ENCODE measurements at regions of chr4 and their contacts with region 1.

Region 1: GRCh38 chr4:140367738-140368137 is 5.7 kb upstream of the SCOC start:
- DNase-seq: no peak
- H3K4me3 ChIP-seq: no peak overlapping the region
- H3K27me3 ChIP-seq: no peaks in the 10 kb centered on the region
- CTCF ChIP-seq: no peak

Region 2: DNA sequence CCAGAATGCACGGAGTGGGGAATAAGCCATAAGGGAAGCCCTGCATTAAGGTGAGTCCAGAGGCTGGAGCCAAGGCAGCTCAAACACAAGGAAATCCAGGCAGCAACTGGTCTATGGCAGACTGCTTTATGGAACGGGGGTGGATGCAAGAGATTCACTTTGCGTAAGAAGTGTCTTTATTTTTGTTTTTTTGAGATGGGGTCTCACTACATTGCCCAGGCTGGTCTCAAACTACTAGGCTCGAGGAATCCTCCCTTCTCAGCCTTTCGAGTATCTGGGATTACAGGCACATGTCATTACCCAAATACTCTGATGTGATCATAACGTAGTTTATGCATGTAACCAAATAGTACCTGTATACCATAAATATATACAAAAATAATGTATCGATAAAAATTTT is 413.2 kb before region 1 on chr4:
- CTCF ChIA-PET with region 1: no interaction called
- POLR2A ChIA-PET with region 1: interaction called, 17 read pairs
- DNase-seq: no peak
- H3K4me3 ChIP-seq: no peak overlapping the region
- H3K27me3 ChIP-seq: peaks cover 3% of the 10 kb centered on the region
- CTCF ChIP-seq: no peak

Region 3: GRCh38 chr4:140037357-140038030 is 330.2 kb before region 1 on chr4:
- CTCF ChIA-PET with region 1: no interaction called
- POLR2A ChIA-PET with region 1: no interaction called
- DNase-seq: peak; percentile 66
- H3K4me3 ChIP-seq: no peak overlapping the region
- H3K27me3 ChIP-seq: no peaks in the 10 kb centered on the region
- CTCF ChIP-seq: no peak

Region 4: DNA sequence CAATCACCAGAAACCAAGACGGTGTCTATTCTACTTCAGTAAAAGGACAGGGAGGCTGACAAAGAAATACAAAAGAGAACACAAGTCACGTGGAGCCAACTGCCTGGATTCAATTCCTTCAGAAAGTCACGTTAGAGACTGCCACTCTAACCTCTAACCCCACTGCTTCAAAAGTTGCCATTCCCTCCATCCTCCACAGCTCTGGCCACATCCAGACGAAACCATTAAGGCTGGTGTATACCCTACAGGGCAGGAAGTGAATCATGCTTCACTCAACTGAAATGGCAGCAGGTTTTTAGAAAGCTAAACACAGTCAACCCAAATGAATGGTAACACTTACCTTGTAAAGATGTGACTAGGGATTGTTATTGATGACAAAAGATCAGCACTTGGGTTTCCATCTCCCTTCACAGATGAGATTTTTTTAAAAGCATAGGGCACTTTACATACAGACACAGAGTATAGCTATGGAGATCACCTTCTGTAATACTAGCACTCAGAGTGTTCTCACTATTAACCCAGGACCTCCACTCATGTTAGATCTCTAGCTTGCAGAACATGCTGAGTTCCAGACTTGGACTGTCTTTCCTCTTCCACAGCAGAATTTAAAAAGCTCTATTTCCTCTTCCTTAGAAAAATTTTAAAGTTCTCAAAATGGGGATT is 251.2 kb before region 1 on chr4:
- CTCF ChIA-PET with region 1: no interaction called
- POLR2A ChIA-PET with region 1: no interaction called
- DNase-seq: no peak
- H3K4me3 ChIP-seq: no peak overlapping the region
- H3K27me3 ChIP-seq: no peaks in the 10 kb centered on the region
- CTCF ChIP-seq: no peak

Region 5: DNA sequence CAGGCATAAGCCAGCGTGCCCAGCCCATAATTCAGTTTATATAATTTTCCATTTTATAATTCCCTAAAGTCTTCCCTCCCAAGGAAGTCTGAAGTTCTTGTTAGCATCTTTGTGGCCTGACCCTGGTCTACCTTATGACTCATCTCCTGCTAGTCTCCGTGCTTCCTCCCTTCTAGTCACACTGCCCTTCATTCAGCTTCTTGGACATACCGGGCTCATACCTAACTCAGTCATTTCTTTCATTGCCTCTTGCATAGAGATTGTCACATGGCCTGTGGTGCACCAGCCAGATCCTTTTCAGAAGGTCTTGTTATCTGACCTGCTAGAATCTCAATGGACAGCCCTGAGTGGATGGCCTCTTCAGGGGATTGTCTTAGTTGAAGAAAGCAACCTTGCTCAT is 191.0 kb before region 1 on chr4:
- CTCF ChIA-PET with region 1: no interaction called
- POLR2A ChIA-PET with region 1: no interaction called
- DNase-seq: no peak
- H3K4me3 ChIP-seq: no peak overlapping the region
- H3K27me3 ChIP-seq: peaks cover 3% of the 10 kb centered on the region; the same call in 1 of the 2 replicates
- CTCF ChIP-seq: no peak